AG04449 (cell line): ENCODE measurements at regions of chr17 and their contacts with region 1.

Region 1: DNA sequence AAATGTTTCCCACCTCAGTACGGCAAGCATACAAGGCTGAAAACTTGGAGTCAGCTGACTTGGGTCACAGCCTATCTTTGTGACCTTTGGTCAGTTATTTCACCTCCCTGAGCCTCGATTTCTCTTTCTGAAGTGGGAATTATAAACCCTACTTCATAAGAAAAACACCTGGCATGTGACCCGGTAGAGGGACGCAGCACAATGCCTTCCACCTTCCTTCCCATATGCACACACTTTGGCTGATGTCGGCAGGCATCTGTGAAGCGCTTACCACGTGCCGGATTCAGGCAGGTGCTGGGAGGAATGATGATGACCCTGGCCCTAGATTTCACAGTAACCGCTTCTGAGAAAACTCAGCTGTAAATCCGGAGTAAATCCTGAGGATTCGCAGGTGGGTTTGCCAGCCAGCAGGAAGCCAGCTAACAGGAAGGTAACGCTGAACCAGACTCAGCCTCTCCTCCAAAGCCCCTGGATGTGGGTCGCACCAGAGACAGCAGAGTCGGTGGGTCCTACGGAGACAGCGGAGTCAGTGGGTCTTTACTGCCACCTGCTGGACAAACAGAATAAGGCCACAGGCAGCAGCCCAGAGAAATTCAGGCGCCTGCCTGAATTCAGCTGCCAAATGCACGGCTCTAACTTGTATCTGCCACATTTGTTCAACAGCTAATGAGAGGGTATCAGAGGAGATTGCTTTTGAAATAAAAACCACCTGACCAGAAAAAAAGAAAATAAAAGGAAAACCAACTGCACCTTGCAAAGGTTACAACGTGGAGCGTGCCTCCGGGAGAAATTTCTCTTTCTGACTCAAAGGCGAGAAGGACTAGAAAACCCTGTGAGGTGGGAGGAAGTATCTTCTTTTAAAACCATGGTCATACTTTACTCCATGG is 16.6 kb downstream of the COPRS start:
- DNase-seq: no peak
- H3K4me3 ChIP-seq: no peak overlapping the region; the same call in none of the 2 replicates
- CTCF ChIP-seq: peak; percentile 83

Region 2: DNA sequence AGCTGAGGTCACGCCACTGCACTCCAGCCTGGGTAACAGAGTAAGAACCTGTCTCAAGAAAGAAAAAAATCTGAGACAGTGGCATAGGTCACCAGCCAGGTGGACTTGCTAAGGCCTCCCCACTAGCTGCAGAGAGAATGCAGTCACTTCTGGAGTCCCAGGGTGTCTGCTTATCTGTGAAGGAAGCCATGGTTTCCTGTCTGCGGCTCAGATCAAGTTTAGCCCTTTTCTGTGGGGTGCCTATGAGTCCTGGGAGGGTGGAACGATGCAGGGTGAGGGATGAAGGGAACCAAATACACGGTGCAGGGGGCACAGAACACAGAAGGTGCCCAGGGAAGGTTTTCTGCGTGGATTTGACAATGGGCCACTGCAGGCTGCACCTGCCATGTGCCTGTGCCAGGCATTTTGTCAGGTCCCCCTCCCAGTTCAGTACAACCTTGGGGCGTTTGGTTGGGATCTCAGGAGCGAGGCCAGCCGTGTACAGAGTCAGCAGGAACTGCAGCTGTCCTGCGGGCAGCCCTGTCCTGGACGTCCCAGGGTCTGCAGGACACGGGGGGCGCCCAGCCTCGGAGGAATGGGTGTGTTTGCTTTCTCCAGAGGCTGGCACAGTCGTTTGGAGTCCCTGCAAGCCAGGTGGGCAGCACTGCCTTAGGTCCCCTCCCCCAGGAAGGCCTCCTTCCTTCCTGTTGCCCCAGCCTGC is 409.2 kb before region 1 on chr17:
- CTCF ChIA-PET with region 1: interaction called, 30 read pairs
- POLR2A ChIA-PET with region 1: no interaction called
- DNase-seq: no peak
- H3K4me3 ChIP-seq: no peak overlapping the region
- CTCF ChIP-seq: no peak

Region 3: GRCh38 chr17:31550389-31551056 is 291.9 kb before region 1 on chr17:
- CTCF ChIA-PET with region 1: interaction called, 200 read pairs
- POLR2A ChIA-PET with region 1: no interaction called
- DNase-seq: no peak
- H3K4me3 ChIP-seq: peak overlapping the region; percentile 87
- CTCF ChIP-seq: no peak

Region 4: DNA sequence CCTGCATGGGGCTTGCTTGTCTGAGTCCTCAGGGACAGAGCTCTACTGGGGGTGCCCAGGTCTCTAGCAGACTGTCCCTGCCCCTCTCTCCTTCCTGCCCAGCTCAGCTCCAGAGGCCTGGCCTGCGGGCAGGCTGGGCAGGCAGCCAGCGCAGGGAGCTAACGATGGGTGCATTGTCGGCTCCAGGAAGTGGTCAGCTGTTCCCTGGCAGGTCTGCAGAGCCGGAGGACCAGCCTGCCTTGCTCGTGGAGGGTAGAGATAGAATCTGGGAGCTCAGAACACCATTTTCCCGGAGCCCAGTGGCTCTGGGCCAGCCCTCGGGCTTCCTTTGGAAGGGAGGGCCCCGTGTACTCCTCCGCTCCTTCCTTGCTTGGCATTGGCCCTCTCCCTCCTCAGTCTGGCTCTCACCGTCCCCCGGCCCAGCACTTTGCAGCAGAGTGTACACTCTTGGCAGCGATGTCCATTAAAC is 261.4 kb before region 1 on chr17:
- CTCF ChIA-PET with region 1: interaction called, 19 read pairs
- POLR2A ChIA-PET with region 1: no interaction called
- DNase-seq: no peak
- H3K4me3 ChIP-seq: no peak overlapping the region
- CTCF ChIP-seq: no peak

Region 5: DNA sequence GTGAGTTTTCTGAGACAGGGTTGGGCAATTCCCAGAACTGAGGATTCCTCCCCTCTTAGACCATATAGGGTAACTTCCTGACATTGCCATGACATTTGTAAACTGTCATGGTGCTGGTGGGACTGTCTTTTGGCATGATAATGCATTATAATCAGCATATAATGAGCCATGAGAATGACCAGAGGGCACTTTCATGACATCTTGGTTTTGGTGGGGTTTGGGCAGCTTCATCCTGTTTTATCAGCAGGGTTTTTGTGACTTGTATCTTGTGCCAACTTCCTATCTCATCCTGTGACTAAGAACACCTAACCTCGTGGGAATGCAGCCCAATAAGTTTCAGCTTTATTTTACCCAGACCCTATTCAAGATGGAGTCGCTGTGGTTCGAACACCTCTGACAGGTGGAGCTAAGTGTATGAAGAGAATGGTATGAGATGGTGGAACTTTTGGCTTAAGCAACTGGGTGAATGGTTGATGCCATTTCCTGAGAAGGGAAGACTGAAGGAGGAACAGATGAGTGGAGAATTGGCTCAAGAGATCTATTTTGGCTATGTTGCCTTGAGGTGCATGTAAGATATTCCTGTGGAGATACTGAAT is 233.7 kb before region 1 on chr17:
- CTCF ChIA-PET with region 1: interaction called, 15 read pairs
- POLR2A ChIA-PET with region 1: interaction called, 3 read pairs
- DNase-seq: no peak
- H3K4me3 ChIP-seq: no peak overlapping the region
- CTCF ChIP-seq: no peak

Region 6: GRCh38 chr17:31858642-31859473 is 16.4 kb after region 1 on chr17 and contains the start of gene COPRS:
- CTCF ChIA-PET with region 1: interaction called, 82 read pairs
- POLR2A ChIA-PET with region 1: interaction called, 3 read pairs
- DNase-seq: no peak
- H3K4me3 ChIP-seq: peak within 1 kb of the TSS; percentile 72
- CTCF ChIP-seq: peak; percentile 26

Region 7: DNA sequence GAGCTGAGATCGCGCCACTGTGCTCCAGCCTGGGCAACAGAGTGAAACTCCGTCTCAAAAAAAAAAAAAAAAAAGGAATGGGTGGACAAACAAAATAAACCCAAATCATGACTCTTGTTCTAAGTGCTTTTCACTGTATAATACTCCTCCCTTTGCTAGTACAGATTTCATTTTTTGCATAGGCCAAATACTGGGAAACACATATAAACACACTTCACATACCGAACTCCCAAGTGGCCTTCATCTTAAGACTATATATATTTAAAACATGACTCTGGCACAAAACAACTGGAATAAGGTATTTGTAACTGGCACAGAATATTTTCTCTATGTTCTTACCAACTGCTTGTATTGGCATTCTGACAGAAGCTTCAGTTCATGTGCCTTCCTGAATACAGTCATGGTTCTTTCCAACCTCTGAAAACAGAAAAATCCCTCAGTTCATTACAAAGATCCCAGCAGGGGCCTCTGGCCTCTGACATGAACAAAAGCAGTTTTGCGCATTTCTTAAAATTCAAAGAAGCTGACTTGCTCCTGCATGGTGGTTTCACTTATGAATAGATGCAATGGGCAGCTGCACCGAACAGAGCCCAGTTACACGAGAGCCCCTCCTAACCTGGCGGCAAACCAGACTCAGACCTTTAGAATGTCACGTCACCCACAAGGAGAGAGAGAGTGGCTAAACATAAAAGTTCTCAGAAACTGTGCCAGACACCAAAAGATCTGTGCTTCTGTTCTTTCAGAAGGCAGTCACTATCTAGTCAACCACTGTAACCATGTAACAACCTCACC is 35.7 kb after region 1 on chr17:
- CTCF ChIA-PET with region 1: no interaction called
- POLR2A ChIA-PET with region 1: no interaction called
- DNase-seq: peak; percentile 44
- H3K4me3 ChIP-seq: no peak overlapping the region
- CTCF ChIP-seq: no peak

Region 8: DNA sequence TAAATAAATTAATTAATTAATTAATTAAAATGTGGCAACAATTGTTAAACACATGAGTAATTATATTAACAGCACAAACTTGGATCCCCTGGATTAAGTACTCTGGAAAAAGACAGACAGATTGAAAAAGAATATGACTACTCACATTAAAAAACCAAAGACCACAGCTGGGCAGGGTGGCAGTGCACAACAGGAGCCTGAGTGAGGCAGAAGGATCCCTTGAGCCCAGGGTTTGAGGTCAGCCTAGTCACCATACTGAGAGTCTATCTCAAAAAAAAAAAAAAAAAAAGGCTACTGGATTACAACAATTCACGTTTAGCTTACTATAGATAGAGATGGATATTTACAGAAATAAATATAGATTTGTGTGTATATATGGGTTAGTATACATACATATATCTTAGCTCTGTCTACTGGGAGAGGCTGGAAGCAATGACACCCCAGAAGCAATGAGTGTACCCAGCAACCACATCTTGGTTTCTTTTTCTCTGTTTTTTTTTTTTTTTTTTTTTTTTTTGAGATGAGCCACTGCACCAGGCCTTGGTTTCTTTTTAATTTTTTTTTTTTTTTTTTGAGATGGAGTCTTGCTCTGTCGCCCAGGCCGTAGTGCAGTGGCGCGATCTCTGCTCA is 83.8 kb after region 1 on chr17:
- CTCF ChIA-PET with region 1: no interaction called
- POLR2A ChIA-PET with region 1: no interaction called
- DNase-seq: no peak
- H3K4me3 ChIP-seq: no peak overlapping the region
- CTCF ChIP-seq: no peak

Region 9: DNA sequence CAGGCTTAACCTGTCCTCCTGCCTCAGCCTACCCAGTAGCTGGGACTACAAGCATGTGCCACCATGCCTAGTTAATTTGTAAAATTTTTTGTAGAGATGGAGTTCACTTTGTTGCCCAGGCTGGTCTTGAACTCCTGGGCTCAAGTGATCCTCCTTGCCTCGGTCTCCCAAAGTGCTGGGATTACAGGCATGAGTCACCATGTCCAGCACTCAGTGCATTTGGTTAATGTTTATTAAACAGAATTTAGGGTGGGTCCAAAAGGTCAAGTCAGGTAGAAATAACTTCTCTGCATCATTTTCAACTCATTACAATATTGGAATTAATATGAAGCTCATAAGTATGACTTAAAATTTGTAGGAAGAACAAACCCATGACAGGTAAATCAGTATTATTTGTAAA is 355.6 kb after region 1 on chr17:
- CTCF ChIA-PET with region 1: no interaction called
- POLR2A ChIA-PET with region 1: no interaction called
- DNase-seq: no peak
- H3K4me3 ChIP-seq: no peak overlapping the region
- CTCF ChIP-seq: no peak